ENCODE measurements at regions of chr11 and their contacts with region 1.

Region 1: DNA sequence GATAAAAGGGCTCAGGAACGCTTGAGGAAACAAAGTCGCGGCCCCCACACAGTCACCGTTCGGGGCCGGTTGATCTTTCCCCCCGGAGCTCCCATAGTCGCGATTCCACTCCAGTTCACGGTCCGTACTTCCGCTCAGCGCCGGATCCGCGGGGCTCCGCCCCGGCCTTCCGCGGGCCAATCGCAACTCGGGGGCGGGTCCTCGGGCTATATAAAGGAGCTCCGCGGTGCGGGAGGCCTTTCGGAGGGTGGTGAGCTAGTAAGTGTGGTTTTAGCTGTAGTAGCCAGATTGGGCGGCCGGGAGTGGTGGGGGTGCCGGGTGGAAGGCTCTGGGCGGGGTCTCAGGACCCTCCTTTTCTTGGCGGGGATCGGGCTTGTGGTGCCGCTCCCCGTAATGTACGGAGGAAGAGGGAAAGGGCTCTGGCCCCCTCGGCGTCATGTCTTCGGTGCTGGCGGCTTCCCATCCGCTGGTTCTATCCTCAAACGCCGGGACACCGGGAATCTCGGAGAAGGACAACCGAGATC is at the starts of genes C11orf98 and CSKMT:
- DNase-seq: peak; percentile 97
- H3K4me3 ChIP-seq: peak within 1 kb of the TSS; percentile 78 to 95
- H3K27ac ChIP-seq: peak within 1 kb of the TSS; percentile 91 to 92
- H3K4me1 ChIP-seq: peaks cover 16 to 21% of the 10 kb centered on the region in 2 experiments; a peak in 3 of 4 replicates
- H3K27me3 ChIP-seq: no peaks in the 10 kb centered on the region
- CTCF ChIP-seq: no peak
- EP300 ChIP-seq: 0 out of 4 replicates have a peak, but pooled peaks of 1 of the 2 experiments have one; percentile 31
- RAD21 ChIP-seq: no peak
- polyA plus RNA-seq, gene C11orf98: 90.1 and 126 TPM in 2 replicates
- polyA plus RNA-seq, gene CSKMT: 9.5 and 11.1 TPM in 2 replicates

Region 2: DNA sequence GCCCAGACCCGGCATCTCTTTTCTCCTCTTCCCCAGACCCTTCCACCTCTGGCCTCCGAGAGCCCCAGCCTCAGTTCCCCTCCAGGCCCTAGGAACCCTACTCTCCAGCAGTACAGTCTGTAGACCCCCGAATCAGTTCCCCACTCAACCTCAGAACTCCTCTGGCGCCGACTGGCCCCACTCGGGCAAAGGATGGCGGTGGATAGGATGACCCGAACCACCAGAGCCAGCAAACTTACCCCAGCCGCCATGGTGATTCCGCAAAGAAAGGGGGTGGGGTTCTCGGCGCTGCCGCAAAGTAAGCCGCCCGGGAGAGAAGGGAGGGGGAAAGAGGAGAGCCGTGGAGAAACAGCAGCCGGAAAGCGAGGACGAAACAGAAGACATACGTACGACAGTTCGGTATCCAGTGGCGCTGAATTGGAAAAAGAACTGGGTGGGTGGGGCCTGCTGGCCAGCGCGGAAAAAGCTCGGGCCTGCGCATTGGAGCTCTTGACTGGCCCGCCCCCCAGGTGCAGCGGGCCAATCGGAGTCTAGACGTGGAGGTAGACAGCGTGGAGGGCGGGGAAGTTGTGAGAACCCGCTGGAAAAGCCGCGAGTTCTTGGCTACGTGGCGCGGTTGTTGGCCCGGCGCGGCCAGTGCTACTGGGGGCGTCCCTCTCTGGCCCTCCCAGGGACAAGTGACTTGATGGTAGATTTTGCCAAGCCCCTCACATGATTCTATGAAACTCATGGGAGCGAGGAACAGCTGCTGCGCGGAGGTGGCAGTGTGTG is 91.4 kb before region 1 on chr11 and contains the start of gene EEF1G:
- CTCF ChIA-PET with region 1: no interaction called
- POLR2A ChIA-PET with region 1: interaction called, 14 read pairs
- DNase-seq: peak; percentile 99
- H3K4me3 ChIP-seq: peak within 1 kb of the TSS; percentile 83 to 93
- H3K27ac ChIP-seq: peak within 1 kb of the TSS; percentile 83 to 87
- H3K4me1 ChIP-seq: peaks cover 19 to 28% of the 10 kb centered on the region in 2 experiments; a peak in 3 of 4 replicates
- H3K27me3 ChIP-seq: no peaks in the 10 kb centered on the region
- CTCF ChIP-seq: no peak
- EP300 ChIP-seq: peak; percentile 15 to 41; a peak in 2 of 4 replicates
- RAD21 ChIP-seq: no peak
- polyA plus RNA-seq, gene EEF1G: 1,853 and 2,105 TPM in 2 replicates

Region 3: GRCh38 chr11:62612366-62613290 is 52.5 kb before region 1 on chr11 and contains the starts of genes EML3 and ROM1:
- CTCF ChIA-PET with region 1: interaction called, 6 read pairs
- POLR2A ChIA-PET with region 1: interaction called, 10 read pairs
- DNase-seq: peak; percentile 97
- H3K4me3 ChIP-seq: peak within 1 kb of the TSS; percentile 71 to 81
- H3K27ac ChIP-seq: peak within 1 kb of the TSS; percentile 70 to 92
- H3K4me1 ChIP-seq: peaks cover 4 to 24% of the 10 kb centered on the region in 2 experiments; a peak in 2 of 4 replicates
- H3K27me3 ChIP-seq: no peaks in the 10 kb centered on the region
- CTCF ChIP-seq: peak; percentile 76
- EP300 ChIP-seq: no peak
- RAD21 ChIP-seq: no peak; the same call in 1 of the 2 replicates
- polyA plus RNA-seq, gene EML3: 43.0 and 47.8 TPM in 2 replicates
- polyA plus RNA-seq, gene ROM1: 7.3 and 7.9 TPM in 2 replicates

Region 4: GRCh38 chr11:62652161-62653006 is 12.8 kb before region 1 on chr11:
- CTCF ChIA-PET with region 1: interaction called, 7 read pairs
- POLR2A ChIA-PET with region 1: interaction called, 52 read pairs
- DNase-seq: no peak
- H3K4me3 ChIP-seq: peak overlapping the region; percentile 68 to 88
- H3K27ac ChIP-seq: peak overlapping the region; percentile 67 to 79; a peak in 3 of 4 replicates
- H3K4me1 ChIP-seq: peaks cover 2 to 5% of the 10 kb centered on the region in 2 experiments; a peak in 2 of 4 replicates
- H3K27me3 ChIP-seq: no peaks in the 10 kb centered on the region
- CTCF ChIP-seq: no peak
- EP300 ChIP-seq: no peak
- RAD21 ChIP-seq: no peak

Region 5: DNA sequence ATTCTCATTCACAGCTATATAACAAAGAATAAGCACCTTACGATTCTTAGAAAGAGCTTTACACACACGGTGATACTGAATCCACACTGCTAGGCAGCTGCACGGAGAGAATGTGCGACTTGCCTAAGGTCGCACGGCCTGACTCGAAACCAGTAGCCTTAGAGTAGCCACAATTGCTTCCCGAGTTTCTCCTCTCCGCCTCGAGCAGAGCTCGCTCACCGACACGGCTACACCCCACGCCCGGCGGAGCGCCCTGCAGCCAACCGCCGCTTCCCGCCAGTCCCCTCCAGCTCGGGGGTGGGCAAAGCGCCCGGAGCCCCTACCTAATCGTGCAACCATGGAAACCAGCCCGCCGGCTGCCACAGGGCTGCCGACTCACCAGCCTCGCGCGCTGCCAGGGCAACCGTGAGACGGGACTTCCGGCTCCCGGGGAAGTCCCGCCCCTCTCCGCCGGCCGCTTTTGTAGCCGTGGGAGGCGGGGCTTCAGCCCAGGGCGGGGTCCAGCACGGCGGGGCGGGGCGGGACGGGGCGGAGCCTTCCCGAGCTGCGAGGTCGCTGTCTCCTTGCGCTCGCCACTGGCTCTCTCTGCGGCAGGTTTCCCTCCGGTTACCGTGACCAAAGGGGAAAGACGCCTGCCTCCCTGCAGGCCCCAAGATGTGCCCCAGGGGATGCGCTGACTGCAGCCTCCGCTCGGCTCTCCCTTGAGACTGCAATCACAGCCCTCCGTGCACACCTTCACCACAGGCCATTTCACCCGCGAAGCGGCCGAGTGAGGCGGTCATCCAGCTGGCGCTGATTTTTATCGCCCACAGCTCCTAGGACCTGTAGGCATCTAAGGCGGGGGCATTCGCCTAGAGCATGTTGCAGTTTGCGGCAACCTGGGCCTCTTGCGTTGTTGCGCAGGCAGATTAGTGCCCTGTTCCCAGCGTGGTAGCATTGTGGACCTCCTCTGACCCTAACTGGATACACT is 41.0 kb after region 1 on chr11:
- CTCF ChIA-PET with region 1: interaction called, 3 read pairs
- POLR2A ChIA-PET with region 1: interaction called, 26 read pairs
- DNase-seq: peak; percentile 97
- H3K4me3 ChIP-seq: peak overlapping the region; percentile 67 to 70
- H3K27ac ChIP-seq: peak overlapping the region; percentile 84 to 93
- H3K4me1 ChIP-seq: peaks cover 22 to 45% of the 10 kb centered on the region in 2 experiments; a peak in 3 of 4 replicates
- H3K27me3 ChIP-seq: no peaks in the 10 kb centered on the region
- CTCF ChIP-seq: no peak
- EP300 ChIP-seq: no peak
- RAD21 ChIP-seq: no peak

Region 6: GRCh38 chr11:62792202-62792575 is 127.1 kb after region 1 on chr11:
- CTCF ChIA-PET with region 1: no interaction called
- POLR2A ChIA-PET with region 1: no interaction called
- DNase-seq: peak; percentile 62
- H3K4me3 ChIP-seq: peak overlapping the region in 1 of 2 experiments; percentile 78; a peak in 3 of 4 replicates
- H3K27ac ChIP-seq: peak overlapping the region; percentile 76 to 84
- H3K4me1 ChIP-seq: peaks cover 9 to 24% of the 10 kb centered on the region in 2 experiments; a peak in 3 of 4 replicates
- H3K27me3 ChIP-seq: no peaks in the 10 kb centered on the region
- CTCF ChIP-seq: no peak
- EP300 ChIP-seq: no peak
- RAD21 ChIP-seq: no peak

Region 7: GRCh38 chr11:62841361-62842184 is 176.4 kb after region 1 on chr11:
- CTCF ChIA-PET with region 1: no interaction called
- POLR2A ChIA-PET with region 1: interaction called, 19 read pairs
- DNase-seq: peak; percentile 87
- H3K4me3 ChIP-seq: peak overlapping the region; percentile 59 to 81
- H3K27ac ChIP-seq: peak overlapping the region; percentile 94 to 95
- H3K4me1 ChIP-seq: peaks cover 13 to 15% of the 10 kb centered on the region in 2 experiments; a peak in 2 of 4 replicates
- H3K27me3 ChIP-seq: no peaks in the 10 kb centered on the region
- CTCF ChIP-seq: no peak
- EP300 ChIP-seq: peak; percentile 72 to 76; a peak in 3 of 4 replicates
- RAD21 ChIP-seq: no peak

Region 8: GRCh38 chr11:63012430-63012829 is 347.3 kb after region 1 on chr11:
- CTCF ChIA-PET with region 1: no interaction called
- POLR2A ChIA-PET with region 1: no interaction called
- DNase-seq: no peak
- H3K4me3 ChIP-seq: no peak overlapping the region
- H3K27ac ChIP-seq: no peak overlapping the region
- H3K4me1 ChIP-seq: peaks cover 3 to 4% of the 10 kb centered on the region in 2 experiments; a peak in 1 of 4 replicates
- H3K27me3 ChIP-seq: no peaks in the 10 kb centered on the region; the same call in none of the 2 replicates
- CTCF ChIP-seq: no peak
- EP300 ChIP-seq: no peak
- RAD21 ChIP-seq: no peak

Measured in SK-N-SH (cell line).